ENCODE measurements at regions of chr10 and their contacts with region 1.

Region 1: GRCh38 chr10:11515596-11516430 is 95.6 kb downstream of the USP6NL start:
- DNase-seq: peak; percentile 46
- CTCF ChIP-seq: peak; percentile 89

Region 2: DNA sequence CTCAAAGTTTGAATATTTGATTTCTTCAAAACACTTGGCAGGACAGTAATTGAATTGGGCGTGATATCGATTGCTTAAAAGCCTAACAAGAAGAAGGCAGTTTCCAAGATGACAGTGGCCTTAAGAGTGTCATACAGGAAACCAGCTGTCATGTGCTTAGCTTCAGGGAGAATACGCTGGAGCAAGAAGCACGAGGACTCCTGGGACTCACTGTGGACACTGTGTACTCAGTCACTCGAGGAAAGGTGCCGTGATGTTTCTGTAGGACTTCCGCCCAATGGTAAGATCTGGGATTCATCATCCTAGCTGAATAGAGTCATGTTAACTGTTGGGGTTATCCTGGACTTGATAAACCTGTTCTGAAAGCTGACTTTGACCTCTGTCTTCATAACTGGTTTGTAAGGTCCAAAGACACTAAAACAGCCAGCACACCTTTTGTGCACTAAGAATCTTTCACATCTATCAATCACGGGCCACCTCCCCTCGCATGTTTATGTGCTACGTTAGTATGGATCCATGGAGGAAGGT is 384.6 kb before region 1 on chr10:
- in situ Hi-C with region 1: no loop called
- DNase-seq: no peak
- CTCF ChIP-seq: no peak

Region 3: DNA sequence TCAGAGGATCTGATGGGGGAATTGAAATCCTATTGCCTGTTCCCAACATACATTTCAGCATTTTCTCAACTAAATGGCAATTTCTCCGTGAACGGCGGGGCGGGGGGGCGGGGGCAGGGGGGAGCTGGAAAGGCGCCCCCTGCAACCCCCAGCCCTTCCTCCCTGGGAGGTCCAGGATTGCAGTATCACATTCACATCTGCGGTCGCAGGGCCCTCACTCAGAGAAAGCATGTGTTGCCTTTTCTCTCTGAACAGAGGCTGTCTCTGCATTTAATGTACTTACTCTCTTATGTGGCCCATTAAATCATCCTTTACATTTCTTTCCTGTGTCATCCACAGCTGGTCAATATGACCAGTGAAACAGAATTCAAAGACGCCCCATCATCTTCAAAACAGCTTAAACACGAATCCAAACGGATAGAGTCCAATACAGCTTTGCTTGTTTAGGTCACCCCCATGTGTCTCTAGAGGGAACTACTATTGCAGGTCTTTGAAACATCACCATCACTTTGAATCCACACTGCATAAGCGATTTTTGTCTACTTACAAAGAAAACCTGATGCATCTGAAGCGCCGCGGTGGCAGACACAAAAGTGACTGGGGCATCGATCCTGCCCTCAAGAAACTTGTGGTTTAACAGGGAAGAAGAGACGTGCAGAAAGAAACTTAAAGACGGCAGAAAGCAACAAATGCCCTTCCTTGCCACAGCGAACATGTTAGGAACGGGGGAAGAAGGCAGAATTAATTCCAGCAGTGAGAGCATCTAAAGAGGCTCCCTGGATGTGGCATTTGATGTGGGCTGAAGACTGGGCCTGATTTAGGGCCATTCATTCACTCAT is 209.3 kb after region 1 on chr10:
- in situ Hi-C with region 1: loop called (anchors 10 kb)
- DNase-seq: peak; percentile 85
- CTCF ChIP-seq: peak; percentile 56

Region 4: DNA sequence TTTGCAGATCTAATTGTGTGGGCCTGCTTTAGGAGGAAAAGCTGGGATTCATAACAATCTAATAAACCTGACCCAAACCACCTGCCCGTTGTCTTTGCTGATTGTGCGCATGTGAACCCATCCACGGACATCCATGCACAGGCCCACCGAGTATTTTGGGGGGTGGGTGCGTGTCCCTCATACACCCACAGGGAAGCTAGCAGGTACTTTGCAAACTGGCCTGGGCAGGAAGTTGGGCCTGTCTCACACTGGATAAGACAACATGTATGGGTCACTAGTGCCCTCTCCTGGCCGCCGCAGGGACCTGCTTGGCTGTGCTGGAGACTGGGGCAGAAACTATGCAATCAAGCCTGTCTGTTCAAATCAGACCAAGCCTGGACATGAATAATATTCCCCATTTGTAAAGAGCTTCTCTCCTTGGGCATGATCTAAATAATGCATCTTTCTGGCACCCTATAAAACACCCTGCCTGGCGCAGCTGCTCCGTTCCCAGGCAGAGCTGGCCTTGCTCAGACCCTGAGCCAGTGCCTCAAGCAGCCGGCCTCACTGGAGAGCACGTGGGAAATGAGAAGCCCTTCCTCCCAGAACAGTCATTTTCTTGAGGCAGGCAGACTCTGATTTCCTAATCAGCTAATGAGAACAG is 242.1 kb after region 1 on chr10:
- in situ Hi-C with region 1: loop called (anchors 10 kb)
- DNase-seq: peak; percentile 90
- CTCF ChIP-seq: peak; percentile 80

Measured in GM13976 (cell line).